ENCODE measurements at regions of chr18 and their contacts with region 1.

Region 1: DNA sequence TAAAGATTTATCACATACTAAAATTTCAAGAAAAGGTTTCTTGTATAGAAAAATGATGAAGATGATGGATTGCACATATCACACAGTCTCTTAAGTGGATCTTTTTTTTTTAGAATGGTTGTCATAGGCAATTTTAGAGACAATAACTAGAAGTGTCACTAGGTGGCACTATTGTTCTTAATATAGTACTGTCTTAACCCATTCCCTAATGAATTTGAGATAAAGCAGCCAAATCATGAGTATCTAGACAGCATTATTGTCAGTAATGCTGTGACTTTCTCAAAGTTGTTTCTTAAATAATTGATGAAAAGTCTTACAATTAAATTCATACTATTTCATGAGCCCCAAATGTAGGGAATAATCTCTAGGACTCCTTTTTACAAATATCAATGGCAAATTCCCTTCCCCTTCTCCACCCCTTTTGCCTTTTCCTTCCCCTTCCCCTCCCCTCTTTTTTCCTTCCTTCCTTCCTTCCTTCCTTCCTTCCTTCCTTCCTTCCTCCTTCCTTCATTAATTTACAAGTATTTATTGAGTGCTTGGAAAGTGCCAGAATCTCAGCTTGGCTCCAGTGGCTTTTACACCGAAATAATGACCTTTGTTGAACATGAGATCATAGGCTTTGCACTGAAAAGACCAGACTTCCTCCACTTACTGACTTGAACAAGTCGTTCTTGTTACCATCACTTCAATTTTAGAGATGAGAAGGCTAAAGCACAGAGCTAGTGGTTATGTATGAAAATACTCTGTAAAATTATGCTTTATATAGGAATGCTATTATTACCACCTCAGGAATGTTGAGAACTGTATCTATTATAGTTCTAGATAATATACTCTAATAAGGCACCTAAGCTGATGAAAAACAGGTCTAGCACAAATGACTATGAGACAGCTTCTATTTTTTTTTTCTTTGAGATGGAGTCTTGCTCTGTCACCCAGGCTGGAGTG is 19.8 kb downstream of the MYL12B start:
- DNase-seq: peak; percentile 78 to 90 (median 87)
- H3K4me3 ChIP-seq: no peak overlapping the region
- H3K27ac ChIP-seq: no peak overlapping the region
- H3K4me1 ChIP-seq: no peaks in the 10 kb centered on the region
- H3K27me3 ChIP-seq: no peaks in the 10 kb centered on the region

Region 2: DNA sequence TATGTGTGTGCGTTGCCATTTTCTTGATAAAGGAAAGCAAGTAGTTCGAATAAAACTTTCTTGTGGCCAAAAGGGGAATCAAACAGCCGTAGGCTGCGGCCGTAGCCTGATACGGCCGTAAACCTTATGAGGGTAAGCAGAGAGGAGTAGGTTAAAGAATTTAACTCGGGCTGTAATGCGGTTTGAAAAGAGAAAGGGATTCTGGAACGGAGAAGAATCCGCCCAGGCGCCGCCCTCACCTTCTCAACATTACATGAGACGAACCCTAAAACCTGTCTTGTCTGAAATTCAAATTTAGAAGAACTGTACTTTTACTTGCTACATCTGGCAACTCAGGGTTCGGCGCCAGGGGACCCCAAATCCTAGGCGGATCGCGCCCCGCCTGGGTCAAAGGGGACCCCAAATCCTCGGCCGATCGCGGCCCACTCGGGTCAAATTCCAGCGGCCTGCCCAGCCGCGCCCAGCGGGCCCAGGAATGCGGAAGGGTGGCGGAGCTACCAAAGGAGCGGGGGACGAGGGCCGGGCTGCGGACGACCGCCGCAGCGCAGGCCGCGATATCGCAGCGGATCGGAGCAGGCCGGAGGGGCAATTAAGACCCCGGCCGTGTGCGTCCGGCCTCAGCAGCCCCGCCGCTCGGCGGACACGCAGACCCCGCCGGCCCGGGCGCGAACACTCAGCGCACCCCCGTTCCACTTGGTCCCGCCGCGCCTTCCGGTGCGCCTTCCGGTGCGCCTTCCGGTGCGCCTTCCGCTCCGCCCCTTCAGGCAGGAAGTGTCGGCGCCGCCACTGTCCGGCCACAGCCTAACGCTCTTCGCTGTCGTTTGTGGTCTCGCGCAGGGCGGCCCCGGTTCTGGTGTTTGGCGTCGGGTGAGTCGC is 20.1 kb before region 1 on chr18 and contains the start of gene MYL12B:
- CTCF ChIA-PET with region 1: interaction called, 19 read pairs
- POLR2A ChIA-PET with region 1: interaction called, 5 read pairs
- DNase-seq: peak; percentile 89 to 96 (median 93)
- H3K4me3 ChIP-seq: peak within 1 kb of the TSS; percentile 83 to 99 (median 90)
- H3K27ac ChIP-seq: peak within 1 kb of the TSS; percentile 95 to 99
- H3K4me1 ChIP-seq: peaks cover 33 to 57% (median 42%) of the 10 kb centered on the region in 4 experiments
- H3K27me3 ChIP-seq: no peaks in the 10 kb centered on the region

Region 3: GRCh38 chr18:3297025-3297984 is 15.6 kb after region 1 on chr18:
- CTCF ChIA-PET with region 1: interaction called, 18 read pairs
- POLR2A ChIA-PET with region 1: no interaction called
- DNase-seq: peak; percentile 93 to 98 (median 97)
- H3K4me3 ChIP-seq: peak overlapping the region; percentile 73 to 93 (median 91)
- H3K27ac ChIP-seq: peak overlapping the region; percentile 29 to 83
- H3K4me1 ChIP-seq: peaks cover 3 to 9% (median 8%) of the 10 kb centered on the region in 4 experiments
- H3K27me3 ChIP-seq: no peaks in the 10 kb centered on the region

Region 4: DNA sequence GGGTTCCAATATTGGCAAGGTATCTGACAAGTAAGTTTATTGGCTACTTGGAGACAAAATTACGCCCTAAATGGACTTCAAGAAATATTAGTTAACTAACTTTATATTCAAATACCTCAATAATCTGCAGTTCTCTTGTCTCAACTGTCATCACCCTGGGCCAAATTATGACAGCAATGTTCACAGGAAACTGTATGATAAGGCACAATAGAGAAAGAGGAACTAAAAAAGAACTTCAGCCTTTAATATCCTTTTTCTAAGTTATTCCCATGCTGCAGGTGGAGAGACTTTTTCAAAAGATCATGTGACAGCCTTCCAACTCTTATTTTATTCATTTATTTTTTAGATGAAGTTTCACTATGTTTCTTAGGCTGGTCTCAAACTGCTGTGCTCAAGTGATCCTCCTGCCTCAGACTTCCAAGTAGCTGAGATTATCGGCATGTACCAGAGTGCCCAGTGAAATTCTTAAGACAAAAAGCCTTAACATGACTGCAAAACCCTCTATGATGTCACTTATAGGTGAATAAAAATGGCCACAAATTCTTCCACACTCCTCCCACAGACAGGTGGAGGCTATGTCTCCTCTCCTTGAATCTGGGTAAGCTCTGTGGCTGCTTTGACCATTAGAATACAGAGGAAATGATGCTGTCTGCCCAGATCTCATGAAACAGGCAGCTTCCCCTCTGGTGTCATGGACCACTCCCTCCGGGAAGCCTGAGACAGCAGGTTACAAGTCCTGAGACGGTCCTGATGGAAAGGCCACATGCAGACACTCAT is 379.2 kb after region 1 on chr18:
- CTCF ChIA-PET with region 1: interaction called, 140 read pairs
- POLR2A ChIA-PET with region 1: interaction called, 3 read pairs
- DNase-seq: peak; percentile 63 to 92 (median 87)
- H3K4me3 ChIP-seq: peak overlapping the region in 5 of 7 experiments; percentile 0 to 43 (median 24)
- H3K27ac ChIP-seq: peak overlapping the region; percentile 29 to 81
- H3K4me1 ChIP-seq: peaks cover 29 to 58% (median 42%) of the 10 kb centered on the region in 4 experiments
- H3K27me3 ChIP-seq: no peaks in the 10 kb centered on the region

Region 5: GRCh38 chr18:3869848-3870247 is 588.1 kb after region 1 on chr18:
- CTCF ChIA-PET with region 1: interaction called, 22 read pairs
- POLR2A ChIA-PET with region 1: no interaction called
- DNase-seq: peak; percentile 65 to 77 (median 75)
- H3K4me3 ChIP-seq: no peak overlapping the region
- H3K27ac ChIP-seq: no peak overlapping the region
- H3K4me1 ChIP-seq: peaks cover 0 to 4% (median 1%) of the 10 kb centered on the region in 4 experiments
- H3K27me3 ChIP-seq: peaks cover 0 to 2% (median 0%) of the 10 kb centered on the region in 5 experiments